K562 (cell line): ENCODE measurements at regions of chr11 and their contacts with region 1.

Region 1: DNA sequence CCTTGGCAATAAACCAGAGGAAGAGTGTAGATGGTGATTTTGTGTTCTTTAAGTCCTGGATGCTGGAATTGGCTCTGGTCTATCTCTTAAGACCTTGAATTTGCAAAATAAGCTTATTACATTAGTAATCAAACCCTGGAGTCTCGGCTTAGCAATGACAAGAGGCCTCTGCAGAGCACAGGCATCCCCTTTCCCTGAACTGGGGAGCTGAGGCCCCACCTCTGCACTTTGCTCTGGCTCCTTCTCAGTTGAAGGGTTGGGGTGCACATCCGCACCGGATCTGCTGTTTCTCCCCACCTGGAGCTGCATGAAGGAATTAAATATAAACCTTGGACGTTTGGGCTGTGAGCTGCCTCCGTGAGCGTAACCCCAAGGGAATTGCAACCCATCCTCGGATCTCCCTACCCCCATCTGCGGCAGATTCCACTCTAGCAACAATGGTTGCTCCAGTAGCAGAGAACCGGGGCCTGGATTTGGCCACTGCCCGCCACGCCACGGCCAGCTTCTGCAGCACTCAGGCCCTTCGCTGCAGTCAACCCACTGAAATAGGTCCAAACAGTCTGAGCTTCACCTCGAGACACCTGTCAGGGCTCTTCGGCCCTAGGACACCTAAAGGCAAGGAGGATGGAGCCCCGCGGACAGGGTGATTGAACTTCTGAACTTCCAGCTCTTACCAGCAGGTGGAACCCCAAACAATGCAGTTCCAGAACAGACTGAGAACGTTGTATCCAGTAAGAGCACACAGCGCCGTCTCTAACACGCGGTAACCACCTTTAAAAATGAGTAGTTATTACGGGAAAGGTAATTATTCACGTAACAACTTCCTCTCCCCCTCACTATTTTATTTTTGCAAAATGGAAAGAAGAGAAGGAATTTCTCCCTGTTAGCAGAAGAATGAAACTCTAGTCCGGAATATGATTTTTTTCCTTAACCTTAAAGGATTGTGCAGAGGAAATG is 54.8 kb upstream of the CAPRIN1 start:
- DNase-seq: peak; percentile 71 to 88 (median 74)
- ATAC-seq: peak; percentile 99
- H3K4me3 ChIP-seq: no peak overlapping the region
- H3K27ac ChIP-seq: no peak overlapping the region
- H3K4me1 ChIP-seq: peaks cover 3 to 8% of the 10 kb centered on the region in 2 experiments; a peak in 3 of 5 replicates
- H3K27me3 ChIP-seq: no peaks in the 10 kb centered on the region
- CTCF ChIP-seq: peak; percentile 91 to 92 (median 91)
- EP300 ChIP-seq: no peak
- POLR2A ChIP-seq: no peak
- RAD21 ChIP-seq: peak; percentile 79 to 89

Region 2: DNA sequence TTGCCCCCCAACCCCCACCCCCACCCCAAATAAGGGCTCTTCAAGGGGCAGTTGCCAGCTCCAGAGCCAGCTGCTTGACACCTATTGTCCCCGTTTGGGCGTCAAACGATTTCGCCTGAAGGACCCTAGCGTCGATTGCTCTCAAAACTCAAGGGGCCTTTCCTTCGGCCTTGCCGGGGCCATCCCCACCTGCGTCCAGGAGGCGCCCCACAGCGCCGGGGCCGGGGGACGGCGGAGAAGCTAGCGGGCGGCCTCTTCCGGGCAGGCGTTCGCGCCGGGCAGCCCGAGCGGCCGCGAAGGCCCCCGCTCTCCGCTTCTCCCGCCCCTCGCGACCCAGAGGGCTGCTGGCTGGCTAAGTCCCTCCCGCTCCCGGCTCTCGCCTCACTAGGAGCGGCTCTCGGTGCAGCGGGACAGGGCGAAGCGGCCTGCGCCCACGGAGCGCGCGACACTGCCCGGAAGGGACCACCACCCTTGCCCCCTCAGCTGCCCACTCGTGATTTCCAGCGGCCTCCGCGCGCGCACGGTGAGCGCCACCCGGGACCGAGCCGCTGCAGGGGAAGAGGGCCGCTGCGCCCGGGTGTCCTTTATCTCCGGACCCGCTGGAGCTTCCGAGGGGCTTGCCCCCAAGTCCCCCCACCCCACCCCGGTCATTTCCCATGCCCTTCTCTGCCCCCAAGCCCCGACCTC is 54.7 kb after region 1 on chr11 and contains the start of gene CAPRIN1:
- CTCF ChIA-PET with region 1: no interaction called
- POLR2A ChIA-PET with region 1: interaction called, 4 read pairs
- in situ Hi-C with region 1: no loop called
- intact Hi-C with region 1: loop called (anchors 2 kb)
- DNase-seq: peak; percentile 87 to 95 (median 90)
- ATAC-seq: peak; percentile 84
- H3K4me3 ChIP-seq: peak within 1 kb of the TSS; percentile 97
- H3K27ac ChIP-seq: peak within 1 kb of the TSS; percentile 97
- H3K4me1 ChIP-seq: peaks cover 13 to 29% of the 10 kb centered on the region in 2 experiments
- H3K27me3 ChIP-seq: no peaks in the 10 kb centered on the region
- CTCF ChIP-seq: peak in 2 of 3 experiments; percentile 32 to 49; a peak in 3 of 6 replicates
- EP300 ChIP-seq: no peak
- POLR2A ChIP-seq: peak; percentile 93
- RAD21 ChIP-seq: 0 out of 4 replicates have a peak, but pooled peaks of 1 of the 2 experiments have one; percentile 22
- polyA plus RNA-seq, gene CAPRIN1: 49.6 to 51.8 TPM

Region 3: GRCh38 chr11:34075178-34075820 is 78.5 kb after region 1 on chr11:
- CTCF ChIA-PET with region 1: no interaction called
- POLR2A ChIA-PET with region 1: no interaction called
- in situ Hi-C with region 1: no loop called
- intact Hi-C with region 1: loop called (anchors 5 kb)
- DNase-seq: no peak
- ATAC-seq: no peak
- H3K4me3 ChIP-seq: no peak overlapping the region
- H3K27ac ChIP-seq: no peak overlapping the region
- H3K4me1 ChIP-seq: no peaks in the 10 kb centered on the region
- H3K27me3 ChIP-seq: no peaks in the 10 kb centered on the region
- CTCF ChIP-seq: no peak
- EP300 ChIP-seq: no peak
- POLR2A ChIP-seq: no peak
- RAD21 ChIP-seq: no peak

Region 4: GRCh38 chr11:34105079-34105956 is 108.5 kb after region 1 on chr11 and contains the start of gene NAT10:
- CTCF ChIA-PET with region 1: no interaction called
- POLR2A ChIA-PET with region 1: interaction called, 4 read pairs
- in situ Hi-C with region 1: no loop called
- intact Hi-C with region 1: loop called (anchors 2 kb)
- DNase-seq: peak; percentile 91 to 99 (median 94)
- ATAC-seq: peak; percentile 87
- H3K4me3 ChIP-seq: peak within 1 kb of the TSS; percentile 83
- H3K27ac ChIP-seq: peak within 1 kb of the TSS; percentile 98
- H3K4me1 ChIP-seq: peaks cover 0 to 6% of the 10 kb centered on the region in 2 experiments; a peak in 3 of 5 replicates
- H3K27me3 ChIP-seq: no peaks in the 10 kb centered on the region
- CTCF ChIP-seq: peak in 2 of 3 experiments; percentile 16 to 25; a peak in 3 of 6 replicates
- EP300 ChIP-seq: no peak; the same call in 1 of the 2 replicates
- POLR2A ChIP-seq: peak; percentile 96
- RAD21 ChIP-seq: peak; percentile 3 to 26; a peak in 3 of 4 replicates
- polyA plus RNA-seq, gene NAT10: 55.4 to 122 TPM

Region 5: DNA sequence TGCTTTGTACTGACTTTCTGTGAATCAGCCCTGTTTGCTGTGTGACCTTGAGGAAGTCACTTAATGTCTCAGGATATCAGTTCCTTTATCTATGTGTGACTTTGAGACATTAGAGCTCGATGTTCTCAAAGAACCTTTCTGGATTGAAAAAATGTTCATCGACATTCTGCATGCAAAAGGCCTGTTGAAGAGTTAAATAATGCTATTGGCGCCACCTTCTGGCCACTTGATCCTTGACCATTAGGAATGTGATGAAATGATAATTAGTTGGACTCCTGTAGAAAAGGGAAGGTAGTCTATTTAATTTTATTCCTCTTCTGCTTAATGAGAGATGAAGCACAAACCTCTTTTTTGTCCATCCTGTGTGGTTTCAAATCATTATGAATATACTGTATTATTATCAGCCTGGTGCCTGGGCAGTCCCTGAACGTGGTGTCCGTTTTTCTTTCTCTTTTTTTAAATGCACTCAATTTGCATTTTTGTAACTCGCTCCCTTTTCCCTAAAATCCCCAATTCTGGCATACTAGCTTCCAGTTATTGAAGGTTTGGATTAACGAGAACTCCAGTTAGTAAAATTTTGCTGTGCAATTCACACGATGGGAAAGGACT is 496.1 kb after region 1 on chr11:
- CTCF ChIA-PET with region 1: no interaction called
- POLR2A ChIA-PET with region 1: no interaction called
- in situ Hi-C with region 1: no loop called
- intact Hi-C with region 1: loop called (anchors 10 kb)
- DNase-seq: peak; percentile 58 to 82 (median 64)
- ATAC-seq: peak; percentile 84
- H3K4me3 ChIP-seq: no peak overlapping the region
- H3K27ac ChIP-seq: no peak overlapping the region
- H3K4me1 ChIP-seq: peaks cover 0 to 4% of the 10 kb centered on the region in 2 experiments; a peak in 2 of 5 replicates
- H3K27me3 ChIP-seq: peaks cover 7 to 44% of the 10 kb centered on the region in 2 experiments; a peak in 4 of 5 replicates
- CTCF ChIP-seq: peak; percentile 54 to 87 (median 69); a peak in 5 of 6 replicates
- EP300 ChIP-seq: no peak
- POLR2A ChIP-seq: no peak
- RAD21 ChIP-seq: peak; percentile 76 to 88